Activated CD4-positive, alpha-beta T cell treated with anti-CD3 and anti-CD28 coated beads for 36 hours (primary cell): ENCODE measurements at regions of chr17 and their contacts with region 1.

Region 1: DNA sequence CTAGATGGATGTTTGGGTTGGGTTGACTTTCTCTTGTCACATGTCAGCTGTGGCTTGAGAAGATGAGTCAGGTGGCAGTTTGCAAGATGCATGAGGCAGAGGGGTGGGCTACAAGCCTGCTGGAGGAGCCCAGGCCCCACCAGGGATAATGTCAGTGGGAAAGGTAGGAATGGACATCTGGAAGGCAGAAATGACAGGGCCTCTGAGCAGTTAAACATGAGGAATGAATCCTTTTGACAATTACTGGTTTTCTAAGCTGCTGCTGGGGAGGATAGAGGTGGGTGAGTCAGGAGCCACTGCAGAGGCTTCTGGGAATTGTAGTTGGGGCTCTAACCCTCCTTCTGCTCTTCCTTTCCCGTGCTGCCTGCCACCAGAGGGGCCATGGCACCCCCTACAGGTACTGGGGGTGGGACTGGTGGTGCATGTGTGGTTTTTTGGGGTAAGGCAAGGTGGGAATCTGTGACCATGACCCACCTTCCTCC is 15.7 kb downstream of the SLC52A1 start:
- DNase-seq: peak; percentile 67
- ATAC-seq: peak; percentile 93
- H3K4me3 Mint-ChIP-seq: no peak overlapping the region
- H3K27ac Mint-ChIP-seq: peak overlapping the region; percentile 56
- H3K4me1 Mint-ChIP-seq: peaks cover 11% of the 10 kb centered on the region
- H3K27me3 Mint-ChIP-seq: no peaks in the 10 kb centered on the region

Region 2: GRCh38 chr17:4721203-4722135 is 298.0 kb before region 1 on chr17:
- CTCF ChIA-PET with region 1: no interaction called
- POLR2A ChIA-PET with region 1: no interaction called
- intact Hi-C with region 1: no loop called
- DNase-seq: no peak
- ATAC-seq: peak; percentile 31
- H3K4me3 Mint-ChIP-seq: no peak overlapping the region
- H3K27ac Mint-ChIP-seq: peak overlapping the region; percentile 29
- H3K4me1 Mint-ChIP-seq: peaks cover 4% of the 10 kb centered on the region
- H3K27me3 Mint-ChIP-seq: no peaks in the 10 kb centered on the region

Region 3: GRCh38 chr17:4747847-4748246 is 271.7 kb before region 1 on chr17:
- CTCF ChIA-PET with region 1: no interaction called
- POLR2A ChIA-PET with region 1: no interaction called
- intact Hi-C with region 1: no loop called
- DNase-seq: peak; percentile 52
- ATAC-seq: peak; percentile 93
- H3K4me3 Mint-ChIP-seq: peak overlapping the region; percentile 19
- H3K27ac Mint-ChIP-seq: peak overlapping the region; percentile 51
- H3K4me1 Mint-ChIP-seq: peaks cover 22% of the 10 kb centered on the region
- H3K27me3 Mint-ChIP-seq: peaks cover 14% of the 10 kb centered on the region

Region 4: DNA sequence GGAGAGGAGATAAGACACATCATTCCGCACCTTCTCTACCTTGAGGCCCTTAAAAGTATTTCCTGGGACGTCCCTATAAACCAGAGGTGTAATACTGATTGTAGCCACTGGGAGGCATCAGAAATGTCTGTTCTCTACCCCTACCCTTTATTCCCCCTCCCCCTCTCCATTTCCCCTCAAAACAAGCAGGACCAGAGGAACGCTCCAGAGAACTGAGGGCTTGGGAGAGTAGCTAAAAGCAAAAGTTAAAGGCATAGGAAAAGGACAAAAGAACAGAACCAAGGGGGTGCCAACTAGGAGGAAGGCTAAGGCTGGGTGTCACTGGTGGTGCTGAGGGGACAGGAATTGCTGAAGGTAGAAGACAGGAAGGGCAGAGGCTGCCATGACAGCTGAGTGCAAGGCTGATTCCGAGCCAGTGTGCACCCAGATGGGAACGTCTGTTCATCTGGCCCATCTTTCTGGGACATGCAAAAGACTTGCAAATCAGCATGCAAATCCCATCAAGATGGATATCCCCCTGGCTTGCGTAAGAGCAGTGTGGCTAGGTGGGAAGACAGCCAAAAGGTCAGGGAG is 38.8 kb before region 1 on chr17:
- CTCF ChIA-PET with region 1: no interaction called
- POLR2A ChIA-PET with region 1: no interaction called
- intact Hi-C with region 1: loop called in 1 of 2 experiments (anchors 1 kb)
- DNase-seq: peak; percentile 57
- ATAC-seq: peak; percentile 94
- H3K4me3 Mint-ChIP-seq: no peak overlapping the region
- H3K27ac Mint-ChIP-seq: peak overlapping the region; percentile 69
- H3K4me1 Mint-ChIP-seq: peaks cover 23% of the 10 kb centered on the region
- H3K27me3 Mint-ChIP-seq: no peaks in the 10 kb centered on the region

Region 5: DNA sequence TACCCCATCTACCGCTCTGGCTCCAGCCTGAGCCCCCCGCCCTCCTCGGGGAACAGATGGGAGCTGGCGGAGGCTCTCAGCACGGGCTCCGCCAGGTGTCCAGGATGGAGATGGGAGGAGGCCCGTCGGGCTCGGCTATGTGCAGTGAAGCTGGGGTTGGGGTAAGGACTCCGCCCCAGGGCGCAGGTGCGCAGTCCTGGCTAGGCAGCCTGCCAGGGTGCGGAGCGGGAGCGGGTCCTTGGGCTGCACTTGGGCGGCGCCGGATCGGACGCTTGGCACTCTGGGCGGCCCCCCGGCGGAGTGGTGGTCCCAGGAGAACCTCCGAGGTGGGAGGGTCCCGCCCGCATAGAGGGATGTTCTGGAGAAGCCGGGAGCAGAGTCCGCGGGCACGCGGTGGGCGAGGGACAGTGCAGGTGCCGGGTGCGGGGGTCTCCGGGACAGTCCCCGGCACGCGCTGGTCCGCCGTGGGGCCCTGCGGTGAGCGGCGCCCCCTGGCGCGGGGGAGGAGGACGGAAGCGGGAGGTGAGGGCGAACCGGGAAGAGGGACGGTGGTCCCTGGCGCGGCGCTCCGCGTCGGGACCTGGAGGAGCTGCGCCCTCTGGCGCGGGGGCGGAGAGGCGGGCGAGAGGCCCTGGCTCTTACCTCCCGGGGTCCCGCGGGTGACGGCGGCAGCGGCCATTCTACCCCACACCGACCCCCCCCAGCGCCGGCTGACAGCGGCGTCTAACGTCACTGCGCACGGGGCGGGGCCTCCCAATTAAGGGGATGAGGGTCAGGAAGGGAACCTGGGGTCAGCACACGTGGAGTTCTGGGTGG is 32.4 kb before region 1 on chr17 and contains the start of gene CAMTA2:
- CTCF ChIA-PET with region 1: interaction called, 4 read pairs
- POLR2A ChIA-PET with region 1: no interaction called
- intact Hi-C with region 1: loop called in 1 of 2 experiments (anchors 1 kb)
- DNase-seq: peak; percentile 91
- ATAC-seq: peak; percentile 87
- H3K4me3 Mint-ChIP-seq: peak within 1 kb of the TSS; percentile 93
- H3K27ac Mint-ChIP-seq: peak within 1 kb of the TSS; percentile 91
- H3K4me1 Mint-ChIP-seq: peaks cover 33% of the 10 kb centered on the region
- H3K27me3 Mint-ChIP-seq: no peaks in the 10 kb centered on the region
- total RNA-seq, gene CAMTA2: 98.2 to 124 TPM

Region 6: DNA sequence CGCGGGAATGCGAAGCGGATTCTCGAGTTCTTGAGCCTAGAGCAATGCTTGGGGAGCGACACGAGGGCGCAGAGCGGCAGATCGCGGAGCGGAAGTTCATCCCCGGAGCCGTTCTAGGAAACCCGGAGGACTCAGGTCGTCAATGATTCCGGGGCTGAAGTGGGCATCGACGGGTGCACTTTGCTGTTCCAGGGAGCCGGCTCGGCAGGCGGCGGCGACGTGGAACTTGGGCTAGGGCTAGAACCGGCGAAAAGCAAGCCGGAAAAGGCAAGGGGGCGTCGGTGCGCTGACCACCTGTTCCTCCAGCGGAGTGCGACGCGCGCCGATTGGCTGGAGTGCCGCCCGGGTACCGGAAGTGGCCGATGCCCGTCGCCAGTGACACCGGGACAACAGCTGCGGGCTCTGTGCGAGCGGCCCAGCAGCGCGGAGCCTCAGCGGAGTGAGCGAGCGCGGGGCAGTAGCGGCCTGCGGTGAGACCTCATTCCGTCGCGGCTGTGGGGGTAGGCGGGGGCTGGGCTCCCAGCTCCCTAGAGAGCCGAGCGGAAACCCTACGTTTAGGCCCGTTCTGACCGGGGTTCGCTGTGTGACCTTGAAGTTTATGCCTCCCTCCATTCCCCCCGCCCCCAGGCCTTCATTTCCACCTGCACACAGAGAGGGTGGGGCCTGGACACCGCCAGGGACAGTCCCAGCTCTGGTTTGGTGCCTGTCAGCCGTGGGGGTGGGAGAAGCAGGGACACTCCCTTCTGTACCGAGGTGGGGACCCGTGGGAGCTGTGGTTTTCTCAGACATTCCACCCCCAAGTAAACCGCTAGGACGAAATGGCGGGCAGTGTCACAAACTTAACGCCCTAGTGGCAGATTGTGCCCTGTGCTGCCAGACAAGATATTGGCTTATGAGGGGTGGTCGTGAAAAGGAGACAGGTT is 58.9 kb after region 1 on chr17 and contains the start of gene ZFP3:
- CTCF ChIA-PET with region 1: no interaction called
- POLR2A ChIA-PET with region 1: interaction called, 11 read pairs
- intact Hi-C with region 1: no loop called
- DNase-seq: peak; percentile 89
- ATAC-seq: peak; percentile 90
- H3K4me3 Mint-ChIP-seq: peak within 1 kb of the TSS; percentile 73
- H3K27ac Mint-ChIP-seq: peak within 1 kb of the TSS; percentile 95
- H3K4me1 Mint-ChIP-seq: peaks cover 30% of the 10 kb centered on the region
- H3K27me3 Mint-ChIP-seq: no peaks in the 10 kb centered on the region
- total RNA-seq, gene ZFP3: 2.2 to 2.8 TPM